Activated CD4-positive, alpha-beta memory T cell treated with anti-CD3 and anti-CD28 coated beads for 36 hours (primary cell): ENCODE measurements at regions of chr10 and their contacts with region 1.

Region 1: DNA sequence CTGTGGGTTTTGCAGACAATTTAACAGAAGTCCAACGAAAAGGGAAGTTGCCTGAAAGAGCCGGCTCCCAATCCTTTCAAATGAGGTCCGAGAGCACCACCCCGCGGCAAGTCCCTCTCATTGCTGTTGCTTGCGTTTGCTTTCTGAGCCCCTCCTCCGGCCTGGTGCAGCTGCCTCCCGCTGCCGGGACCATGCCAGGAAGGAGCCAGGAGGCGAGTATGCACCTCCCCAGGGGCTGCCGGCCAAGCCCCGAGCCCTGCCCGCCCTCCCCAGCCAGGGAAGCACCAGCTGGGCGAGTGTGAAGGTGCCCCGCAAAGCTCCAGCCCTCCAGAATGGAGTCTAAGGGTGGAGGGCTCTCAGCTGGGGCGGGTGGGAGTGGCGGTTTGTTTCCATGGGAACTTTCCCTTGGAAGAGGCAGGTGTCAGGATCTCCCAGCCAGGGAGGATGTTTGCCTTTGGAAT is 25.8 kb upstream of the PPP2R2D start:
- DNase-seq: peak; percentile 77
- H3K4me3 Mint-ChIP-seq: no peak overlapping the region
- H3K27ac Mint-ChIP-seq: no peak overlapping the region
- H3K4me1 Mint-ChIP-seq: peaks cover 3% of the 10 kb centered on the region
- H3K27me3 Mint-ChIP-seq: peaks cover 33% of the 10 kb centered on the region

Region 2: GRCh38 chr10:131453594-131454355 is 421.2 kb before region 1 on chr10:
- CTCF ChIA-PET with region 1: interaction called, 3 read pairs
- POLR2A ChIA-PET with region 1: no interaction called
- intact Hi-C with region 1: loop called (anchors 1 kb)
- DNase-seq: peak; percentile 82
- H3K4me3 Mint-ChIP-seq: no peak overlapping the region
- H3K27ac Mint-ChIP-seq: no peak overlapping the region
- H3K4me1 Mint-ChIP-seq: peaks cover 6% of the 10 kb centered on the region
- H3K27me3 Mint-ChIP-seq: peaks cover 14% of the 10 kb centered on the region

Region 3: DNA sequence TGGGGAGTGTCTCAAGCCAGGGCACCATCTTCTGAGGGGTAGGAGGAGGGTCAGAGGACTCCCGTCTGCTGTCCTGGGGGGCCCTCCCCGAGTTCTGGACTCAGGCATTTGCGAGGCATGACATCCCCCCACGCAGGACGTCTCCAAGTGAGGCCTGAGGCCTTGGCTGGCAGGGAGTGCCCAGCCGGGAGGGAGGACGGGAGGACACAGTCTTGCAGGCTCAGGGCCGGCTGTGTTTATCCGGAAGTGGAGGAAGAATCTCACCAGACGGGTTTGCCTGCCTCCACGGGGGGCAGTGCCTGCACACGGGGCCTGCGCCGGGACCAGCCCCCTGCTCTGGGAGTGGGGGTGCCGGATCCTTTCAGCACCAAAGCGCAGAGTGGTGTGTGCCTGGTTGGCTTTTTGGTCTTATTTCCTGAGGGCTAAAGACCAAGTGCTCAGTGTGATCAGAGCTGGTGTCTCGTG is 532.8 kb after region 1 on chr10:
- CTCF ChIA-PET with region 1: no interaction called
- POLR2A ChIA-PET with region 1: no interaction called
- intact Hi-C with region 1: no loop called
- DNase-seq: no peak
- H3K4me3 Mint-ChIP-seq: no peak overlapping the region
- H3K27ac Mint-ChIP-seq: no peak overlapping the region
- H3K4me1 Mint-ChIP-seq: peaks cover 8% of the 10 kb centered on the region
- H3K27me3 Mint-ChIP-seq: no peaks in the 10 kb centered on the region